ENCODE measurements at regions of chr14 and their contacts with region 1.

Region 1: GRCh38 chr14:71320107-71320733 is 413.0 kb downstream of the PCNX1 start:
- DNase-seq: peak; percentile 94 to 99 (median 98)
- ATAC-seq: peak; percentile 92
- H3K4me3 ChIP-seq: peak within 1 kb of the TSS; percentile 69
- H3K4me3 Mint-ChIP-seq: peak within 1 kb of the TSS; percentile 90 to 95 (median 94)
- H3K27ac ChIP-seq: peak within 1 kb of the TSS; percentile 94
- H3K27ac Mint-ChIP-seq: peak within 1 kb of the TSS; percentile 88 to 98 (median 95)
- H3K4me1 ChIP-seq: peaks cover 6 to 36% of the 10 kb centered on the region in 2 donors
- H3K4me1 Mint-ChIP-seq: peaks cover 28 to 48% (median 47%) of the 10 kb centered on the region in 7 donors
- H3K27me3 ChIP-seq: no peaks in the 10 kb centered on the region
- H3K27me3 Mint-ChIP-seq: peaks cover 0 to 3% (median 0%) of the 10 kb centered on the region in 5 donors

Region 2: GRCh38 chr14:69611201-69612011 is 1708.8 kb before region 1 on chr14 and contains the start of gene SUSD6:
- CTCF ChIA-PET with region 1: no interaction called
- POLR2A ChIA-PET with region 1: no interaction called
- intact Hi-C with region 1: loop called in 1 of 2 experiments (anchors 2 kb)
- DNase-seq: peak; percentile 79 to 87 (median 85)
- ATAC-seq: peak; percentile 88
- H3K4me3 ChIP-seq: peak within 1 kb of the TSS; percentile 91
- H3K4me3 Mint-ChIP-seq: peak within 1 kb of the TSS; percentile 91 to 98 (median 94)
- H3K27ac ChIP-seq: peak within 1 kb of the TSS; percentile 85
- H3K27ac Mint-ChIP-seq: peak within 1 kb of the TSS; percentile 95 to 99 (median 98)
- H3K4me1 ChIP-seq: peaks cover 38 to 54% of the 10 kb centered on the region in 2 donors
- H3K4me1 Mint-ChIP-seq: peaks cover 44 to 69% (median 63%) of the 10 kb centered on the region in 7 donors
- H3K27me3 ChIP-seq: no peaks in the 10 kb centered on the region
- H3K27me3 Mint-ChIP-seq: no peaks in the 10 kb centered on the region
- total RNA-seq, gene SUSD6: 42.9 to 90.8 (median 65.0) TPM

Region 3: DNA sequence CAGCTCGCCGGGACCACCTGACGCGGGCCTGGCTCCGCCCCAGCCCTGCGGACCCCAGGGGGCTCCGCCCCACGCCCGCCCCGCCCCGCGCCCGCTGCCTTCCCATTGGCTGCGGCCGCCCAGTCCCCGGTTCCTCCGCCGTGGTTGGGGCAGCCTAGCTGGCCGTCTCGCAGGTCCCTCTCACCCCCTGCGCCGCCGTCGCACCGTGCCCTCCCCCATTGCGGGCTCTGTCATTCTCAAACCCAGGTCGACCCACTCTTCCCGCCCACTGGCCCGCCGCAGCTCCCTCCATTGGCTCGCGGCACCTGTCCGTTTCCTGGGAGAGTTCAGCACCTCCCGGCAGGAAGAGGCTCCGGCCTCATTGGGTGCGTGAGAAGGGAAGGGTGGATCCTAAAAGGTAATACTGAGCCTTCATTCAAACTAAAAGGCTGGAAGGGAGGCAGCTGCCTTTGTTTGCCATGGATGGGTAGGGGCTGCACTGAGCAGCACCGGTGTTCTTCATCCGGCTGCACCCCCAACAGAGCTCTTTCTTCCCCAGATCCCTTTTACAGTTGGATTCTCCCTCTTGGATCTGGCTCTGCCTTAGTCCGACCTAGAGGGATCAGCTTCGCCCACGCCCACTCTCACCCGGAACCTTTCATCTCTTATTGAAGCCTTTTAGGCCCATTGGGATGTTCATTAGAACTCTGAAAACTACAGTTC is 510.5 kb before region 1 on chr14:
- CTCF ChIA-PET with region 1: no interaction called
- POLR2A ChIA-PET with region 1: no interaction called
- intact Hi-C with region 1: loop called in 1 of 2 experiments (anchors 2 kb)
- DNase-seq: peak; percentile 68 to 87 (median 78)
- ATAC-seq: peak; percentile 90
- H3K4me3 ChIP-seq: peak overlapping the region; percentile 73
- H3K4me3 Mint-ChIP-seq: peak overlapping the region in 1 of 10 donors; percentile 87
- H3K27ac ChIP-seq: peak overlapping the region; percentile 65
- H3K27ac Mint-ChIP-seq: peak overlapping the region in 6 of 9 donors; percentile 79 to 92 (median 88)
- H3K4me1 ChIP-seq: peaks cover 3 to 10% of the 10 kb centered on the region in 2 donors
- H3K4me1 Mint-ChIP-seq: peaks cover 9 to 17% (median 13%) of the 10 kb centered on the region in 7 donors
- H3K27me3 ChIP-seq: no peaks in the 10 kb centered on the region
- H3K27me3 Mint-ChIP-seq: peaks cover 0 to 9% (median 4%) of the 10 kb centered on the region in 5 donors

Region 4: DNA sequence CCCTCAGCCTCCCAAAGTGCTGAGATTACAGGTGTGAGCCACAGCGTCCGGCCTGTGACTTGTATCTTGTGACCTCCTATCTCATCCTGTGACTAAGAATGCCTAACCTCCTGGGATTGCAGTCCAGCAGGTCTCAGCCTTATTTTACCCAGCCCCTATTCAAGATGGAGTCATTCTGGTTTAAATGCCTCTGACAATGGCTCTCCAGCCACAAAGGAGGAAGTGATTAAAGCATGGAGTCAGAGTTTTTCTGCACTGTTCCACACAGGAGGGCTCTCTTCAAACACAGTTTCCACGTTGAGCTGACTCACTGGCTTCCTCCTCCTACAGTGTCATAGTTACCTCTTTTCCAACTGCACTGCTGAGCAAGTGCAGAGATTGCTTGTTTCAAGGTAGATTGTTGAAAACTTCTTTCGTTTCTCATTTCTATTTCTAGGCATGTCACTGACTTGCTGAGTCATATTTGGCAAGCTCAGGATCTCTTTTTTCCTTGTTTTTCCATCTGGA is 29.2 kb before region 1 on chr14:
- CTCF ChIA-PET with region 1: no interaction called
- POLR2A ChIA-PET with region 1: no interaction called
- intact Hi-C with region 1: loop called in 1 of 2 experiments (anchors 2 kb)
- DNase-seq: peak in 1 of 9 donors; percentile 41
- ATAC-seq: peak; percentile 87
- H3K4me3 ChIP-seq: no peak overlapping the region
- H3K4me3 Mint-ChIP-seq: peak overlapping the region in 1 of 10 donors; percentile 10
- H3K27ac ChIP-seq: no peak overlapping the region
- H3K27ac Mint-ChIP-seq: peak overlapping the region in 1 of 9 donors; percentile 72
- H3K4me1 ChIP-seq: no peaks in the 10 kb centered on the region
- H3K4me1 Mint-ChIP-seq: peaks cover 0 to 27% (median 0%) of the 10 kb centered on the region in 7 donors
- H3K27me3 ChIP-seq: no peaks in the 10 kb centered on the region
- H3K27me3 Mint-ChIP-seq: peaks cover 0 to 6% (median 0%) of the 10 kb centered on the region in 5 donors

Region 5: DNA sequence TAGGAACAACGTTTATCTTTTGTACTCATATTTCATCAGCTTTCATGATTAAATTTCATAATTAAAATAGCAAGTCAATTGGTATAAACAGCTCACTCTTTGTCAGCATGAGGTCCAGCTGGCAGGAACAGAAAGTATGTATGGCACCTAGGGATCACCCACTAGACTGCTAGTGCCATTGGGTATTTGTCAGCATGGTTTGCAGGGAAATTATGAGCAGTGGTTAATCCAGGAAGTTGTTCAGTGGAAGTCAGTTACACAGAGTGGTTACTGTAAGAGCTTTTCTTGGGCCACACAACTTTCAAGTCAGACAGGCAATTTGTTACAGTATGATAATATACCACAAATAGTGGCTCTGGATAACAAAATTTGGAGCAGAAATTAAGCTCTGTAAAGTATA is 271.7 kb after region 1 on chr14:
- CTCF ChIA-PET with region 1: no interaction called
- POLR2A ChIA-PET with region 1: no interaction called
- intact Hi-C with region 1: loop called in 1 of 2 experiments (anchors 5 kb)
- DNase-seq: peak in 1 of 9 donors; percentile 5
- ATAC-seq: peak; percentile 57
- H3K4me3 ChIP-seq: no peak overlapping the region
- H3K4me3 Mint-ChIP-seq: peak overlapping the region in 4 of 10 donors; percentile 13 to 45 (median 28)
- H3K27ac ChIP-seq: no peak overlapping the region
- H3K27ac Mint-ChIP-seq: peak overlapping the region in 7 of 9 donors; percentile 42 to 76 (median 54)
- H3K4me1 ChIP-seq: peaks cover 6 to 11% of the 10 kb centered on the region in 2 donors
- H3K4me1 Mint-ChIP-seq: peaks cover 20 to 72% (median 61%) of the 10 kb centered on the region in 7 donors
- H3K27me3 ChIP-seq: no peaks in the 10 kb centered on the region
- H3K27me3 Mint-ChIP-seq: no peaks in the 10 kb centered on the region

Region 6: GRCh38 chr14:71855399-71856036 is 535.3 kb after region 1 on chr14:
- CTCF ChIA-PET with region 1: no interaction called
- POLR2A ChIA-PET with region 1: no interaction called
- intact Hi-C with region 1: loop called in 1 of 2 experiments (anchors 10 kb)
- DNase-seq: peak in 3 of 9 donors; percentile 1 to 58 (median 3)
- ATAC-seq: no peak
- H3K4me3 ChIP-seq: no peak overlapping the region
- H3K4me3 Mint-ChIP-seq: no peak overlapping the region
- H3K27ac ChIP-seq: no peak overlapping the region
- H3K27ac Mint-ChIP-seq: no peak overlapping the region
- H3K4me1 ChIP-seq: no peaks in the 10 kb centered on the region
- H3K4me1 Mint-ChIP-seq: peaks cover 0 to 14% (median 0%) of the 10 kb centered on the region in 7 donors
- H3K27me3 ChIP-seq: peaks cover 0 to 3% of the 10 kb centered on the region in 2 donors
- H3K27me3 Mint-ChIP-seq: peaks cover 30 to 70% (median 48%) of the 10 kb centered on the region in 5 donors